T-cell (primary cell): ENCODE measurements at regions of chr2 and their contacts with region 1.

Region 1: DNA sequence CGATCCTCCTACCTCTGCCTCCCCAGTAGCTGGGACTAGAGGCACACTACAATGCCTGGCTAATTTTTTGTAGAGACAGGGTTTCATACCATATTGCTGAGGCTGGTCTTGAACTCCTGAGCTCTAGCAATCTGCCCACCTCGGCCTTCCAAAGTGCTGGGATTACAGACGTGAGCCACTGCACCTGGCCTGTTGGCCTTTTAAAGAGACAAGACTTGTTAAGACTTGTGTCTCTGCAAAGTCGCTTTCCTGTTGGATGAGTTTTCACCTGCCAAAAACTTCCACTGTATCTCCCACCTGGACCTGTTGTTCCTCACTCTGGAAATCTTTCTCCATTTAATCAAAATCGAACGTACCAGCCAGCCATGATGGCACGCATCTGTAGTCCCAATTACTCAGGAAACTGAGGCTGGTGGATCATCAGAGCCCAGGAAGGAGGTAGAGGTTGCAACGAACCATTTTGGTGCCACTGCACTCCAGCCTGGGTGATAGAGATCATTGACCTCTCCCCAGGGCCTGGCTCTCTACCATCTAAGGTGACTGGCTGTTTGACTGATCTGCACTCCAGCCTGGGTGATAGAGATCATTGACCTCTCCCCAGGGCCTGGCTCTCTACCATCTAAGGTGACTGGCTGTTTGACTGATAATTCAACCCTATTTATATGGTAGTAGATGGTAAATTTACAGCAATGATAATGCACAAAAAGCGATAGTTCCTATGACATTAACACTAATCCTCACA is 43.8 kb downstream of the FOXI3 start:
- DNase-seq: no peak
- ATAC-seq: no peak
- H3K4me3 ChIP-seq: no peak overlapping the region
- H3K4me3 Mint-ChIP-seq: no peak overlapping the region
- H3K27ac ChIP-seq: no peak overlapping the region
- H3K27ac Mint-ChIP-seq: no peak overlapping the region
- H3K4me1 ChIP-seq: no peaks in the 10 kb centered on the region
- H3K4me1 Mint-ChIP-seq: no peaks in the 10 kb centered on the region
- H3K27me3 ChIP-seq: peaks cover 0 to 11% of the 10 kb centered on the region in 2 experiments
- H3K27me3 Mint-ChIP-seq: peaks cover 1 to 3% of the 10 kb centered on the region in 2 donors

Region 2: GRCh38 chr2:88016086-88016959 is 392.4 kb before region 1 on chr2 and contains the start of gene RNU2-63P:
- CTCF ChIA-PET with region 1: no interaction called
- POLR2A ChIA-PET with region 1: no interaction called
- DNase-seq: peak; percentile 49 to 87 (median 74)
- ATAC-seq: peak; percentile 83 to 92 (median 89)
- H3K4me3 ChIP-seq: peak within 1 kb of the TSS; percentile 86 to 96
- H3K4me3 Mint-ChIP-seq: peak within 1 kb of the TSS; percentile 92 to 97 (median 95)
- H3K27ac ChIP-seq: peak within 1 kb of the TSS; percentile 97
- H3K27ac Mint-ChIP-seq: peak within 1 kb of the TSS; percentile 99
- H3K4me1 ChIP-seq: peaks cover 0 to 13% of the 10 kb centered on the region in 2 experiments
- H3K4me1 Mint-ChIP-seq: peaks cover 14 to 25% (median 21%) of the 10 kb centered on the region in 3 donors
- H3K27me3 ChIP-seq: peaks cover 0 to 5% of the 10 kb centered on the region in 2 experiments
- H3K27me3 Mint-ChIP-seq: no peaks in the 10 kb centered on the region
- total RNA-seq, gene RNU2-63P: 4.0 to 18.7 (median 13.3) TPM in 3 of 5 donors, not detected in the others

Region 3: GRCh38 chr2:88283886-88284592 is 124.7 kb before region 1 on chr2:
- CTCF ChIA-PET with region 1: no interaction called
- POLR2A ChIA-PET with region 1: interaction called in 1 of 2 experiments, 12 read pairs
- DNase-seq: peak in 1 of 35 experiments; percentile 7
- ATAC-seq: no peak
- H3K4me3 ChIP-seq: no peak overlapping the region
- H3K4me3 Mint-ChIP-seq: no peak overlapping the region
- H3K27ac ChIP-seq: no peak overlapping the region
- H3K27ac Mint-ChIP-seq: no peak overlapping the region
- H3K4me1 ChIP-seq: peaks cover 0 to 3% of the 10 kb centered on the region in 2 experiments
- H3K4me1 Mint-ChIP-seq: peaks cover 0 to 4% (median 0%) of the 10 kb centered on the region in 3 donors
- H3K27me3 ChIP-seq: peaks cover 0 to 23% of the 10 kb centered on the region in 2 experiments
- H3K27me3 Mint-ChIP-seq: peaks cover 7 to 25% of the 10 kb centered on the region in 2 donors